ENCODE measurements at regions of chr6 and their contacts with region 1.

Region 1: DNA sequence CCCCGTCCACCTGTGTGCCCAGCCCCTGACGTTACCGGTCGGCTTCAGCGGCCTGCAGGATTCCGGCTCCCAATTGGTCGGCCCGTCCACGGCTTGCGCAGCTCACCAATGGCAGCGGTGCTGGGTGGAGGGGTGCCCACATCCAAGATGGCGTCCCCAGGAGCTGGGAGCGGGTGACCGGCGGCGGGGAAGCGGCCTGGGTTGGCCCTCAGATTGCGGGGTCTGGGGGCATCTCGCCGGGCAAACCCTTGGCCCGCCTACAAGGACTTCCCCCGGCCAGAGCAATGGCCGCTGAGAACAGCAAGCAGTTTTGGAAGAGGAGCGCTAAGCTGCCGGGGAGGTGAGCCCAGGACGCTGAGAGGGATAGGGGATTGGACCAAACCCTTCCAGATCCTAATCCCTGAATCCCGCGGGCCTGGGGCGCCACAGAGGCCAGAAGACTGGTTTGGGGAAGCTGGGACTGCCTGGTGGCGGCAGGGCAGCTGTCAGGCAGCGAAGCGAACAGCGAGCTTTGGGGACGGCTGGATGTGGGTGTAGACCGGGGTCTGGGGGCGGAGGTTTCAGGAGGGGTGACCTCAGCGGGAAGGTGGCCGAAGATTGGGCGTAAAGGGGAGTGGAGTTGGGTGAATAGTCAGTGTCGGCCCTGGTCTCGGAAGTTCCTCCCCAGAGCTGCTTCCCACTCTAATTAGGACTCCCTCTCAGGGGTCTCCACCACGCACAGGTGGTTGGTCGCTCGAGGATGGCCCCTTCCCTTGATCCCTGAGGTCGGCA is at the starts of genes TBC1D22B and TMEM217:
- DNase-seq: peak; percentile 95
- H3K4me3 Mint-ChIP-seq: peak within 1 kb of the TSS; percentile 97
- H3K27ac Mint-ChIP-seq: peak within 1 kb of the TSS; percentile 100
- H3K4me1 Mint-ChIP-seq: peaks cover 78% of the 10 kb centered on the region
- H3K27me3 Mint-ChIP-seq: no peaks in the 10 kb centered on the region
- total RNA-seq, gene TBC1D22B: 20.8 and 21.2 TPM in 2 replicates
- total RNA-seq, gene TMEM217: 7.7 and 9.9 TPM in 2 replicates

Region 2: DNA sequence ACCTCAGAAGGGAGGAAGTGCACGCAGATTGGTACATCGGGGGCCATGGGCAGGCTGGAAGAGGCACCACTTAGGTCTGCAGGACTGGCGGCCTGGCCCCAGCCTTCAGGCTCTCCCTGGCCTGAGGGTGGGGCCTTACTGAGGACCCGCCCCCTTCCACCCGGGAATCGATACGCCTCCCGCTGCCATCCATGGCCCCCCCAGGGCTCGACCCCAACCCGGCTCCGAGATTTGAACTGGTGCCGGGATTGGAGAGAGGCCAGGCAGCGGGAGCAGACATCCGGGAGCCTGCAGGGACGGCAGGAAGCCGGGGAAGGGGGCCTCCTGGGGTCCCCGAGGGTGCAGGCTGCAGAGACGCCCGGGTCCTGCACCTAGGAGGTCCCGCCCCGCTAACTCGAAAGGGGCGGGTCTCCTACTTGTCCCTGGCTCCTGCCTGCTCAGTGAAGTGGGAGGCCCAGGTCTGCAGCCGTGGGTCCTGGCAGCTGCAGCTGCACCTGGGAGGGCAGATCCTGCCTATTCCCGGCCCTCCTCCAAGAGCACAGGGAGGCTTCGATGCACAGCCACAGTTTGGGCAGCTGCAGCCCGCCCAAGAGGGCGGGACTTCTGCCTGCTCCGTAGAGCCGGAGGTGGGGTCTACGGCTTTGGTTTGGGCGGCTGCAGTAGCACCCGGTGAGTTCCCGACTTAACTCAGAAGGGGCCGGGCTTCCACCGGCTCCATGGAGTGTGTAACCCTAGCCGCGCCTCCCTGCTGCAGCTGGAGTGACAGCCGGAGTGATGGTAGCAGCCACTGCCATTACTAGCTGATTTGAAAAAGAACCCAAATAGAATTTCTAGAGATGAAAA is 35.5 kb before region 1 on chr6:
- intact Hi-C with region 1: loop called (anchors 1 kb)
- DNase-seq: peak; percentile 77
- H3K4me3 Mint-ChIP-seq: peak overlapping the region; percentile 79
- H3K27ac Mint-ChIP-seq: peak overlapping the region; percentile 80
- H3K4me1 Mint-ChIP-seq: peaks cover 51% of the 10 kb centered on the region
- H3K27me3 Mint-ChIP-seq: no peaks in the 10 kb centered on the region

Region 3: GRCh38 chr6:37239950-37240713 is 17.7 kb before region 1 on chr6:
- intact Hi-C with region 1: loop called (anchors 1 kb)
- DNase-seq: peak; percentile 49
- H3K4me3 Mint-ChIP-seq: peak overlapping the region; percentile 38
- H3K27ac Mint-ChIP-seq: peak overlapping the region; percentile 90
- H3K4me1 Mint-ChIP-seq: peaks cover 64% of the 10 kb centered on the region
- H3K27me3 Mint-ChIP-seq: no peaks in the 10 kb centered on the region

Region 4: GRCh38 chr6:37272834-37273566 is 15.2 kb after region 1 on chr6:
- intact Hi-C with region 1: loop called (anchors 1 kb)
- DNase-seq: no peak
- H3K4me3 Mint-ChIP-seq: peak overlapping the region; percentile 81
- H3K27ac Mint-ChIP-seq: peak overlapping the region; percentile 92
- H3K4me1 Mint-ChIP-seq: peaks cover 82% of the 10 kb centered on the region
- H3K27me3 Mint-ChIP-seq: no peaks in the 10 kb centered on the region

Region 5: DNA sequence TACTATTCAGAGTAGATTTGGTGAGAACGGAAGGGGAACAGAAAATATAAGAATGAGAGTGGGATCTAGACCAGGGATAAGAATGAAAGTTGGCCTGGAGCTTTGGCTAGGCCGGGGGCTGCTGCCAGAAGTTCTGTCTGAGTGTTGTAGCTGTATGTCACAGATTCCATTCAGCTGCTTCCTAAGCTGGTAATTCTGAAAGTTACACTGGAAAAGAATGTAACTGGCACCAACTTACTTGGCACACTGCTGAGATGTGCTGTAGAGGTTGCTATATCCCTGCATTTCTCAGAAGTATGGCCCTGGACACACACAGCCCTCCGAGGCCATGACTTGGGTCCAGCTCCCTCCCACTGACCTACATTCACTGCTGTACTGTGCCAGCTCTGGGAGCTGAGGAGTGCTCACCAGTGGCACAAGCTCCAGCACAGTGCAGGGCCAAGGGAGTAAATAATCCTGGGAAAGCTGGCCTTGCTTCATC is 25.9 kb after region 1 on chr6:
- intact Hi-C with region 1: loop called (anchors 1 kb)
- DNase-seq: no peak
- H3K4me3 Mint-ChIP-seq: no peak overlapping the region
- H3K27ac Mint-ChIP-seq: no peak overlapping the region
- H3K4me1 Mint-ChIP-seq: peaks cover 59% of the 10 kb centered on the region
- H3K27me3 Mint-ChIP-seq: no peaks in the 10 kb centered on the region

Region 6: DNA sequence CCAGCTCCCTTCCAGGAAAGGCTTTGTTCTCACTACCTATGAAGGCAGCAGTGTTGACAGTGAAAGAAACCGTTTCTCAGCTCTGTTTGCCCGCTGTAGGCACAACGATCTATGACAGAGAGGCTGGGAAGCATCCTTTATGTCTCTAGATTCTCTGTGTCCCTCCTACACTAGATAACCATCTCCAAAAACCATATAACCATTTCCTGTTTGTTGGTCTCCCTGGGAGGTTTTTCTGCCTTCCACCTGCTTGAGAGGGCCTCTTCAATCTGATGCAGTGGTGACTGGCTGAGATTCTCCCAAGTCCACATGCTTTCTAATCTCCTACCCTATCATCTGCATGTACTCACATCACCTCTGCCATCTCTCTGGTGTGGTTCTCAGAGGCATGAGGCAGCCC is 32.1 kb after region 1 on chr6:
- intact Hi-C with region 1: loop called (anchors 1 kb)
- DNase-seq: peak; percentile 54
- H3K4me3 Mint-ChIP-seq: peak overlapping the region; percentile 55
- H3K27ac Mint-ChIP-seq: peak overlapping the region; percentile 89
- H3K4me1 Mint-ChIP-seq: peaks cover 49% of the 10 kb centered on the region
- H3K27me3 Mint-ChIP-seq: no peaks in the 10 kb centered on the region

Region 7: GRCh38 chr6:37303932-37304363 is 46.1 kb after region 1 on chr6:
- intact Hi-C with region 1: no loop called
- DNase-seq: no peak
- H3K4me3 Mint-ChIP-seq: no peak overlapping the region
- H3K27ac Mint-ChIP-seq: peak overlapping the region; percentile 25
- H3K4me1 Mint-ChIP-seq: peaks cover 30% of the 10 kb centered on the region
- H3K27me3 Mint-ChIP-seq: no peaks in the 10 kb centered on the region

Region 8: GRCh38 chr6:37339741-37340638 is 82.2 kb after region 1 on chr6:
- intact Hi-C with region 1: no loop called
- DNase-seq: no peak
- H3K4me3 Mint-ChIP-seq: no peak overlapping the region
- H3K27ac Mint-ChIP-seq: no peak overlapping the region
- H3K4me1 Mint-ChIP-seq: peaks cover 5% of the 10 kb centered on the region
- H3K27me3 Mint-ChIP-seq: peaks cover 9% of the 10 kb centered on the region

Measured in activated T-helper 1 cell treated with anti-CD3 and anti-CD28 coated beads, Interleukin-12 subunit alpha, Interleukin-12 subunit beta, Interleukin-2, Interleukin-4 antibody, amounts not matched to agents 30 ng/mL and 10 ng/mL and 1 ng/mL, durations not matched to agents 14 hours and 24 hours and 36 hours (primary cell).